Naive thymus-derived CD4-positive, alpha-beta T cell (primary cell): ENCODE measurements at regions of chr1 and their contacts with region 1.

Region 1: GRCh38 chr1:161225534-161226319 is at the start of gene TOMM40L:
- DNase-seq: peak; percentile 66 to 96 (median 92)
- ATAC-seq: peak; percentile 95
- H3K4me3 ChIP-seq: peak within 1 kb of the TSS; percentile 73
- H3K4me3 Mint-ChIP-seq: peak within 1 kb of the TSS; percentile 89 to 100 (median 98)
- H3K27ac ChIP-seq: peak within 1 kb of the TSS; percentile 70
- H3K27ac Mint-ChIP-seq: peak within 1 kb of the TSS; percentile 69 to 99 (median 97)
- H3K4me1 ChIP-seq: peaks cover 8 to 24% of the 10 kb centered on the region in 2 donors
- H3K4me1 Mint-ChIP-seq: peaks cover 19 to 58% (median 43%) of the 10 kb centered on the region in 7 donors
- H3K27me3 ChIP-seq: no peaks in the 10 kb centered on the region
- H3K27me3 Mint-ChIP-seq: no peaks in the 10 kb centered on the region
- total RNA-seq, gene TOMM40L: 8.9 to 24.3 (median 11.8) TPM

Region 2: DNA sequence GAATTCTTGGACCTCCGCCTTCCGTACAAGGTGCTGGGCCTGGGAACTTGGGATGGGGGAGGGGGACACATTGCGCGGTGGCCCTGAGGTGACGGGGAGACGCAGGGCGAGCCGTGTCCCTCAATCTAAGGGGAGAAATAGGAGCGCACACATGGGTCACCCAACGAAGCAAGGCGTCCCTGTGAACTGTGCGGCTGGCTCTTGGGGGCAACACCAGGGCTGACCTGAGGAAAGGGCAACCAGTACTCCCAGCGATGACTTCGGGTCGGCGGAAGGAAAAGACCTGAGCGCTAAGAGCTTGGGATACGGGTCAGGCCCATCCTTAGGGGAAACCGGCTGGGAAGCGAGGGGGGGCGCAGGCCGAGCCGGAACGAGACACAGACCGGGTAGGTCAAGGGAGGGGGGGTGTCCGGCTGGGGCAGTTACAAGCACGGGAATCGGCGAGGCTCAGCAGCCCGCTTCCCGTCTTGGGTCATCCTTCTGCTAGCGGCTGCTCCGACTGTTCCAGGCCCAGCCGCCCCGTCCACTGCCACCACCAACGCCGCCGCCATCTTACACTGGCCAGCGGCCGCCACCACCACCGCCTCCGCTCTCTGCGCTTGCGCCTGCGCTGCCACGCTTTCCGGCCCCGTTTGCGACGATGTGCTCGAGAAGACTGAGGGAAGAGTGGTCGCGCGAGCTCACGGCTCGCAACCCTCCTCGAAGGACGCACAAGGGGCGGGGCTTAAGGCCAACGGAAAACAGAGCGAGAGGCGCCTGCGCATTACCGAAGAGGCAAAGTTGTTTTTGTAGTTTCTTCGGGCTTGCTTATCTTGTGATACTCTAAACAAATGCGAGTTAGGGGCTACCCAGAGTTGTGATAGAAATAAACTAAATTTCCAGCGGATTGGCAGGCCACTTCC is 963.6 kb before region 1 on chr1 and contains the start of gene DCAF8:
- CTCF ChIA-PET with region 1: no interaction called
- POLR2A ChIA-PET with region 1: no interaction called
- intact Hi-C with region 1: loop called in 1 of 2 experiments (anchors 10 kb)
- DNase-seq: peak; percentile 92 to 97 (median 96)
- ATAC-seq: peak; percentile 96
- H3K4me3 ChIP-seq: peak within 1 kb of the TSS; percentile 66
- H3K4me3 Mint-ChIP-seq: peak within 1 kb of the TSS; percentile 82 to 100 (median 97)
- H3K27ac ChIP-seq: peak within 1 kb of the TSS; percentile 93
- H3K27ac Mint-ChIP-seq: peak within 1 kb of the TSS; percentile 94 to 100 (median 96)
- H3K4me1 ChIP-seq: peaks cover 22 to 29% of the 10 kb centered on the region in 2 donors
- H3K4me1 Mint-ChIP-seq: peaks cover 23 to 59% (median 45%) of the 10 kb centered on the region in 7 donors
- H3K27me3 ChIP-seq: no peaks in the 10 kb centered on the region
- H3K27me3 Mint-ChIP-seq: peaks cover 0 to 3% (median 0%) of the 10 kb centered on the region in 5 donors
- total RNA-seq, gene DCAF8: 115 to 226 (median 176) TPM

Region 3: DNA sequence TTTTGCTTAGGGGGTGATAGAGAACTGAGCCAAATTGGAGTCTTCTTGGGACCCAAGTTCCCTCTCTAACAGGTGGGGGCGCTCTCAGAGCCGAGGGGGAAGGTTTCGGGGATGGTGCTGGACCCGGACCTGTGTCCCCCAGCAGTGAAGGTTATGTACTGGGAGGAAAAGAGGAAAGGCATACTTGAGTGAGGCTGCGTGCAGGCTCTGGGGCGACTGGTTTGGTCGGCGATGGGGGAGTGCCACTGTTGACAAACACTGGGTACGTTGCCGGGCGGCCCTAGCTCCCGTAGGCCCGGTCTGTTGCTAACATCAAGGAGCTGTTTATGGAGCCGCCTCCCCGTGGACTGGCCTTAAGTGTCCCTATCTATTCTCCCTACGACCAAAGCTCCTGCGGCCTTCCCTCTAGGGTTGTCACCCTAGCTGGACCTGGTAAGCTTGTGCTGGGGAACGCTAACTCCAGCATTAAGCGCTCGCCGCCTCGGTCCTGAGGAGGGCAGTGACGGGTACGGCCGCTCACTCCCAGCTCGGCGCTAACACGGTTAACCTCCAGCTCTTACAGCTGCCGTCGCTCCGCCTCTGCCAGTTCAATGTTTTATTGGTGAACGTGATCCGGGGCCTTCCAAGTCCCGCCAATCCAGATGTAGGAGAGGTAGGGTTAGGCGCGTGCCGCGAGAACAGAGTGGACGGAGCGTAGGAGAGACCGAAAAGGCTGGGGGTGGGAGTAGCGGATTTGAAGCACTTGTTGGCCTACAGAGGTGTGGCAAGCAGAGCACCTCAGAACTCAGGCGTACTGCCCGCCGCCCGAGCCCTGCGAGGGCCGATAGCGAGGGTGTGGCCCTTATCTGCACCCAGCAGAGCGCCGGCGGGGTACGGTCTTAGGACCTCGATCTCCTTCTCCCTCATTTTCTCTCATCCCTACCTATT is 59.7 kb before region 1 on chr1 and contains the start of gene PPOX:
- CTCF ChIA-PET with region 1: interaction called, 25 read pairs
- POLR2A ChIA-PET with region 1: interaction called, 16 read pairs
- intact Hi-C with region 1: loop called (anchors 1 kb)
- DNase-seq: peak; percentile 78 to 95 (median 93)
- ATAC-seq: peak; percentile 94
- H3K4me3 ChIP-seq: peak within 1 kb of the TSS; percentile 93
- H3K4me3 Mint-ChIP-seq: peak within 1 kb of the TSS; percentile 86 to 98 (median 94)
- H3K27ac ChIP-seq: peak within 1 kb of the TSS; percentile 86
- H3K27ac Mint-ChIP-seq: peak within 1 kb of the TSS; percentile 93 to 99 (median 99)
- H3K4me1 ChIP-seq: peaks cover 14 to 17% of the 10 kb centered on the region in 2 donors
- H3K4me1 Mint-ChIP-seq: peaks cover 38 to 77% (median 66%) of the 10 kb centered on the region in 7 donors
- H3K27me3 ChIP-seq: no peaks in the 10 kb centered on the region
- H3K27me3 Mint-ChIP-seq: no peaks in the 10 kb centered on the region
- total RNA-seq, gene PPOX: 39.7 to 76.2 (median 43.4) TPM

Region 4: GRCh38 chr1:161192476-161193465 is 33.0 kb before region 1 on chr1:
- CTCF ChIA-PET with region 1: interaction called, 59 read pairs
- POLR2A ChIA-PET with region 1: interaction called, 508 read pairs
- intact Hi-C with region 1: loop called (anchors 1 kb)
- DNase-seq: peak in 8 of 9 donors; percentile 53 to 80 (median 74)
- ATAC-seq: peak; percentile 95
- H3K4me3 ChIP-seq: no peak overlapping the region
- H3K4me3 Mint-ChIP-seq: peak overlapping the region in 5 of 10 donors; percentile 18 to 50 (median 29)
- H3K27ac ChIP-seq: no peak overlapping the region
- H3K27ac Mint-ChIP-seq: peak overlapping the region; percentile 51 to 93 (median 85)
- H3K4me1 ChIP-seq: peaks cover 34 to 53% of the 10 kb centered on the region in 2 donors
- H3K4me1 Mint-ChIP-seq: peaks cover 30 to 68% (median 42%) of the 10 kb centered on the region in 7 donors
- H3K27me3 ChIP-seq: no peaks in the 10 kb centered on the region
- H3K27me3 Mint-ChIP-seq: no peaks in the 10 kb centered on the region

Region 5: GRCh38 chr1:161235957-161236773 is 10.4 kb after region 1 on chr1:
- CTCF ChIA-PET with region 1: interaction called, 10 read pairs
- POLR2A ChIA-PET with region 1: interaction called, 3 read pairs
- intact Hi-C with region 1: no loop called
- DNase-seq: no peak
- ATAC-seq: peak; percentile 4
- H3K4me3 ChIP-seq: no peak overlapping the region
- H3K4me3 Mint-ChIP-seq: no peak overlapping the region
- H3K27ac ChIP-seq: no peak overlapping the region
- H3K27ac Mint-ChIP-seq: no peak overlapping the region
- H3K4me1 ChIP-seq: no peaks in the 10 kb centered on the region
- H3K4me1 Mint-ChIP-seq: peaks cover 0 to 1% (median 0%) of the 10 kb centered on the region in 7 donors
- H3K27me3 ChIP-seq: no peaks in the 10 kb centered on the region
- H3K27me3 Mint-ChIP-seq: peaks cover 0 to 9% (median 0%) of the 10 kb centered on the region in 5 donors

Region 6: DNA sequence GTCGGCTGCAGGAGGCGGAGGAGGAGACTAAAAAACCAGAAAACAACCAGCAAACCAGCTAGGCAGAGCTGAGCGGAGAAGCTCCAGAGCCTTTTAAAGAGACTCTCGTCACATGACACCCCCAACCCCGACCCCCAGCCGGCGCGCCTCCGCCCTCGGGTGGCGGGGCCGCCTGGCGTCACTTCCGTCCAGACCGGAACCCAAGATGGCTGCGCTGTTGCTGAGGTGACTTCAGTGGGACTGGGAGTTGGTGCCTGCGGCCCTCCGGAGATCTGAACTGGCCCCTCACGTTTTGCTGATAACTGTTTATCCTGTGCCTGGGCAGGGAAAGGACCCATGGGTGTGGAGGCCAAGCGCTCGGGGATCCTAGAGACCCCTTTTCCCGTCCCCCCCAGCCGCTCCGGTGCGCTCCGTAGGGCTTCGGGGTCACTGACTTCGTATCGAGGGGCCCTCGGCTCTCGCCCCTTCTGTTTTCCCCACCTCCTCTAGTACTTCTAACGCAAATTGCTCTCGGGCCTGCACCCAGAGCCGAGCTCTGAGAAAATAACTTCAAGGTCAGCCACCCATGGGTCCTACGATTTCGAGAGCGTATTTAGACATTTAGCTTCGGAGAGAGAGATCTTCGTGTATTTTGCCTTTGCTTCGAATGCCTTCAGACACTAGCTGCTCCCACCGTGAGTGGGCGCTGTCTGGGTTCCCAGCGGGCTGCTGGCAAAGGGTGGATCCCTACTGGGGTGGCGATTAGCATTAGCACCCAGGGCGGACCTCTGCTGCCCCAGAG is 88.7 kb after region 1 on chr1 and contains the start of gene SDHC:
- CTCF ChIA-PET with region 1: interaction called, 11 read pairs
- POLR2A ChIA-PET with region 1: interaction called, 20 read pairs
- intact Hi-C with region 1: loop called (anchors 1 to 2 kb)
- DNase-seq: peak; percentile 83 to 95 (median 93)
- ATAC-seq: peak; percentile 99
- H3K4me3 ChIP-seq: peak within 1 kb of the TSS; percentile 72
- H3K4me3 Mint-ChIP-seq: peak within 1 kb of the TSS; percentile 91 to 99 (median 98)
- H3K27ac ChIP-seq: peak within 1 kb of the TSS; percentile 97
- H3K27ac Mint-ChIP-seq: peak within 1 kb of the TSS; percentile 98 to 100 (median 99)
- H3K4me1 ChIP-seq: peaks cover 0 to 15% of the 10 kb centered on the region in 2 donors
- H3K4me1 Mint-ChIP-seq: peaks cover 13 to 39% (median 31%) of the 10 kb centered on the region in 7 donors
- H3K27me3 ChIP-seq: no peaks in the 10 kb centered on the region
- H3K27me3 Mint-ChIP-seq: peaks cover 0 to 7% (median 0%) of the 10 kb centered on the region in 5 donors
- total RNA-seq, gene SDHC: 66.3 to 174 (median 106) TPM

Region 7: DNA sequence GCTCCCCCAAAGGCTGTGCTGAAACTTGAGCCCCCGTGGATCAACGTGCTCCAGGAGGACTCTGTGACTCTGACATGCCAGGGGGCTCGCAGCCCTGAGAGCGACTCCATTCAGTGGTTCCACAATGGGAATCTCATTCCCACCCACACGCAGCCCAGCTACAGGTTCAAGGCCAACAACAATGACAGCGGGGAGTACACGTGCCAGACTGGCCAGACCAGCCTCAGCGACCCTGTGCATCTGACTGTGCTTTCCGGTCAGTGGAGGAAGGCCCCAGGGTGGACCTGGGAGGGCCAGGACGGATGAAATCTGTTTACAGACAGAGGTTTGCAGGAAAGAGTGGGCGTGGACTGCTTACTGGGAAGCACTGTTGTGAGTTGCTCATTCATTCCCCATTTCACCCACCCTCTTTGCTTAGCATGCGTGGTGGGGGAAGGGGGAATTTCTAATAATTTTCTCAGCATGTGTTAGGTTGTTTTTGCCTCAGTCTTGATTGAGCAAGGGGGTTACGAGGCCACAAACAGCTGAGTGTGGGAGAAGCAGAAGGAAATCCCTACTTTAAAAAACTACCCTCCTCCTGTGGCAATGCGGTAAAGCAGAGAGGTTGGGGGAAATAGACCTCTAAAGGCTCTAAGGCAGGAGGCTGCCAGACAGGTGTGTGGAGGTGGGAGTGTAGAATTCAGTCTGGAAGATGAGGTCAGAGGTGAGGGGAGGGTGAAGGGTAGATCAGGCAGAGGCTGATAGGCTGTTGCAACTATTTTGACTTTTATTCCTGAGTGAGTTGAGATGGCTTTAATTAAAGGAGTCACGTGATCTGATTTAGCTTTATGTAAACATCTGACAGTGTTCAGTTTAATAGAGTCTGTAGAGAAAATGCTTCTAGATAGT is 280.9 kb after region 1 on chr1:
- CTCF ChIA-PET with region 1: no interaction called
- POLR2A ChIA-PET with region 1: no interaction called
- intact Hi-C with region 1: no loop called
- DNase-seq: no peak
- ATAC-seq: peak; percentile 68
- H3K4me3 ChIP-seq: no peak overlapping the region
- H3K4me3 Mint-ChIP-seq: no peak overlapping the region
- H3K27ac ChIP-seq: no peak overlapping the region
- H3K27ac Mint-ChIP-seq: no peak overlapping the region
- H3K4me1 ChIP-seq: no peaks in the 10 kb centered on the region
- H3K4me1 Mint-ChIP-seq: peaks cover 0 to 13% (median 3%) of the 10 kb centered on the region in 7 donors
- H3K27me3 ChIP-seq: no peaks in the 10 kb centered on the region
- H3K27me3 Mint-ChIP-seq: peaks cover 18 to 27% (median 21%) of the 10 kb centered on the region in 5 donors

Region 8: GRCh38 chr1:161726596-161727457 is 501.1 kb after region 1 on chr1:
- CTCF ChIA-PET with region 1: no interaction called
- POLR2A ChIA-PET with region 1: no interaction called
- intact Hi-C with region 1: loop called in 1 of 2 experiments (anchors 5 kb)
- DNase-seq: peak; percentile 48 to 68 (median 64)
- ATAC-seq: peak; percentile 73
- H3K4me3 ChIP-seq: peak overlapping the region; percentile 93
- H3K4me3 Mint-ChIP-seq: peak overlapping the region; percentile 89 to 100 (median 99)
- H3K27ac ChIP-seq: peak overlapping the region; percentile 59
- H3K27ac Mint-ChIP-seq: peak overlapping the region in 6 of 9 donors; percentile 38 to 94 (median 72)
- H3K4me1 ChIP-seq: peaks cover 11 to 16% of the 10 kb centered on the region in 2 donors
- H3K4me1 Mint-ChIP-seq: peaks cover 30 to 51% (median 35%) of the 10 kb centered on the region in 7 donors
- H3K27me3 ChIP-seq: no peaks in the 10 kb centered on the region
- H3K27me3 Mint-ChIP-seq: peaks cover 0 to 76% (median 0%) of the 10 kb centered on the region in 5 donors